Activated CD4-positive, alpha-beta T cell treated with anti-CD3 and anti-CD28 coated beads for 36 hours (primary cell): ENCODE measurements at regions of chr12 and their contacts with region 1.

Region 1: GRCh38 chr12:54439521-54440255 is 20.6 kb upstream of the ITGA5 start:
- DNase-seq: no peak
- ATAC-seq: peak; percentile 85
- H3K4me3 Mint-ChIP-seq: no peak overlapping the region
- H3K27ac Mint-ChIP-seq: no peak overlapping the region
- H3K4me1 Mint-ChIP-seq: peaks cover 9% of the 10 kb centered on the region
- H3K27me3 Mint-ChIP-seq: no peaks in the 10 kb centered on the region

Region 2: GRCh38 chr12:52741392-52742195 is 1698.1 kb before region 1 on chr12:
- CTCF ChIA-PET with region 1: no interaction called
- POLR2A ChIA-PET with region 1: no interaction called
- intact Hi-C with region 1: no loop called
- DNase-seq: peak; percentile 80
- ATAC-seq: peak; percentile 51
- H3K4me3 Mint-ChIP-seq: no peak overlapping the region
- H3K27ac Mint-ChIP-seq: no peak overlapping the region
- H3K4me1 Mint-ChIP-seq: no peaks in the 10 kb centered on the region
- H3K27me3 Mint-ChIP-seq: no peaks in the 10 kb centered on the region

Region 3: GRCh38 chr12:54411391-54412241 is 28.1 kb before region 1 on chr12:
- CTCF ChIA-PET with region 1: interaction called, 638 read pairs
- POLR2A ChIA-PET with region 1: interaction called, 3 read pairs
- intact Hi-C with region 1: no loop called
- DNase-seq: peak; percentile 80
- ATAC-seq: peak; percentile 85
- H3K4me3 Mint-ChIP-seq: peak overlapping the region; percentile 60
- H3K27ac Mint-ChIP-seq: peak overlapping the region; percentile 89
- H3K4me1 Mint-ChIP-seq: peaks cover 55% of the 10 kb centered on the region
- H3K27me3 Mint-ChIP-seq: no peaks in the 10 kb centered on the region

Region 4: DNA sequence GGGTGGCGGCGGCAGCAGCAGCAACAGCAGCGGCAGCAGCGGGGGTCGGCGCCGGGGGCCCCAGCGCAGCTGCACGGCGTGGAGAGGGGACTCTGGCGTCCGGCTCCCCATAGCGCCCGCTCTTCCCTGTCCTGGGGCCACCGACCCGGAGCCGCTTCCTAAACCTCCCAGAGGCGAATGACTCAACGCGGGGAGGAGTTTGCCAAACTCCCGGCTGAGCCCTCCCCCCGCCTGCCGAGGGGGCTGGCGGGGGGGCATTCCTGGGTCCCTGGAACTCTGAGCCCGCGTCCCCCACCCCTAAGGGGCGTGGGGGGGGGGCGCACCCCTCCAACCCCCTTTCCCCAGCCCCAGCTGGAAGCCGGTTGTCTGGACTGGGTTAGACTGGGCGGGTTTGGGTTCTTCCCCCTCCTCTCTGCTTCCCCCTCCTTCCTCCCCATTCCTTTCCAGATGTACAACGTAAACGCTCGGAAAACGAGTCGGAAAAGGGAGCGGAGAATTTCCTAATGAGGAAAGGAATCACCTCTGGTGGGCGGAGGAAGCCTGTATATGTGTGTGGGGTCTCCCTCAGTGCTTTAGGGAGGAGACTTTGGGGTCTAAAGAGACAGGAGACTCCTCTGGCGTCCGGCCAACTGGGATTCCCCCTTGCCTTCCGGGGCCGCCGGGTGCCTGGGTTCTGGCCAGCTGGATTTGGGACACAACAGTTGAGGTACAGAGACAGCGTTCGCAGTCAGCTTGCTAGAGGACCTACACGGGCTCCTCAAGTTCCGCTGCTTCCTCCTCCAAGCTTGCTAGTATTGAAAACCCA is 20.4 kb before region 1 on chr12 and contains the start of gene ITGA5:
- CTCF ChIA-PET with region 1: interaction called, 27 read pairs
- POLR2A ChIA-PET with region 1: no interaction called
- intact Hi-C with region 1: no loop called
- DNase-seq: peak; percentile 66
- ATAC-seq: peak; percentile 42
- H3K4me3 Mint-ChIP-seq: peak within 1 kb of the TSS; percentile 96
- H3K27ac Mint-ChIP-seq: peak within 1 kb of the TSS; percentile 95
- H3K4me1 Mint-ChIP-seq: peaks cover 42% of the 10 kb centered on the region
- H3K27me3 Mint-ChIP-seq: no peaks in the 10 kb centered on the region
- total RNA-seq, gene ITGA5: 38.6 to 58.0 TPM

Region 5: GRCh38 chr12:54428050-54429013 is 11.4 kb before region 1 on chr12:
- CTCF ChIA-PET with region 1: interaction called, 25 read pairs
- POLR2A ChIA-PET with region 1: interaction called, 3 read pairs
- intact Hi-C with region 1: no loop called
- DNase-seq: peak; percentile 35
- ATAC-seq: no peak
- H3K4me3 Mint-ChIP-seq: no peak overlapping the region
- H3K27ac Mint-ChIP-seq: no peak overlapping the region
- H3K4me1 Mint-ChIP-seq: peaks cover 29% of the 10 kb centered on the region
- H3K27me3 Mint-ChIP-seq: peaks cover 3% of the 10 kb centered on the region

Region 6: GRCh38 chr12:54452628-54453027 is 12.9 kb after region 1 on chr12:
- CTCF ChIA-PET with region 1: interaction called, 32 read pairs
- POLR2A ChIA-PET with region 1: no interaction called
- intact Hi-C with region 1: no loop called
- DNase-seq: no peak
- ATAC-seq: no peak
- H3K4me3 Mint-ChIP-seq: no peak overlapping the region
- H3K27ac Mint-ChIP-seq: no peak overlapping the region
- H3K4me1 Mint-ChIP-seq: no peaks in the 10 kb centered on the region
- H3K27me3 Mint-ChIP-seq: no peaks in the 10 kb centered on the region